Ascending aorta (tissue), 2 donors: ENCODE measurements at regions of chr18 and their contacts with region 1.

Region 1: GRCh38 chr18:51029694-51030536 is at the start of gene SMAD4:
- DNase-seq: peak; percentile 79 to 98
- H3K4me3 ChIP-seq: peak within 1 kb of the TSS; percentile 91 to 95
- H3K27ac ChIP-seq: peak within 1 kb of the TSS; percentile 92 to 99
- H3K4me1 ChIP-seq: peaks cover 3 to 34% of the 10 kb centered on the region in 2 donors
- H3K27me3 ChIP-seq: no peaks in the 10 kb centered on the region
- CTCF ChIP-seq: no peak
- total RNA-seq, gene SMAD4: 196 TPM

Region 2: GRCh38 chr18:49486953-49487710 is 1542.8 kb before region 1 on chr18 and contains the start of gene C18orf32:
- intact Hi-C with region 1: loop called (anchors 10 kb)
- DNase-seq: peak; percentile 71 to 97
- H3K4me3 ChIP-seq: peak within 1 kb of the TSS; percentile 58 to 96
- H3K27ac ChIP-seq: peak within 1 kb of the TSS; percentile 93 to 98
- H3K4me1 ChIP-seq: peaks cover 4 to 13% of the 10 kb centered on the region in 2 donors
- H3K27me3 ChIP-seq: no peaks in the 10 kb centered on the region
- CTCF ChIP-seq: no peak
- total RNA-seq, gene C18orf32: 7.8 TPM

Region 3: DNA sequence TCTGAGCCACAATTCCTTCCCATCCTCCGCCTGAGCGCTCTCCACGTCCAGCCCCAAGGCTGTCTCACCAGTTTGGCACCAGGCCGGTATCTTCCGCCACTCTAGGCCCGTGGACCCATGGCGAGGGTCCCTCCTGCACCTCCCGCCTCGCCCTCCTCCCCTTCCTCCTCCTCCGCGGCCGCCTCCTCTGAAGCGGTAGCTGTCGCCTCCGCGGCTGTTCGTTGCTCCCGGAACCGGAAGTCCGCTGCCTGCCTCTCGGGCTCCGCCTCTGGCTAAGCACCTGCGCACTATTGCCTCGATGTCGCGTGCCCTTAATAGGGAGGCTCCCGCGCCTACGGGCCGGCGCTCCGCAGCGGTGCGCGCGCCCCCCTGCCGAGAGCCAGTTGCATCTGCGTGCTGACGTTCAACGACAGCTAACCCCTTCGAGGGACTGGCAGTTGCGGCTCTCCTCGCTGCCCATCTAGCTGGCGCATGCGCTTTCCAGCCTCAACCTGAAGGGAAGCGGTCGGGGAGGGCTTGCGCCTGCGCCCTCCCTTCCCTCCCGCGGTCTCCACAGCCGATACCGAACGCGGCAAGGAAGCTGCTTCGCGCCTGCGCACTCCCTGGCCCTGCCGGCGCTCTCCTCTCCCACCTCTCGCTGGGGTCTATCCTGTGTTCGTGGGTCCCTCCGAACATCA is 748.5 kb before region 1 on chr18 and contains the start of gene MBD1:
- intact Hi-C with region 1: loop called (anchors 1 kb)
- DNase-seq: peak; percentile 92 to 98
- H3K4me3 ChIP-seq: peak within 1 kb of the TSS; percentile 71 to 93
- H3K27ac ChIP-seq: peak within 1 kb of the TSS; percentile 92 to 97
- H3K4me1 ChIP-seq: peaks cover 3 to 23% of the 10 kb centered on the region in 2 donors
- H3K27me3 ChIP-seq: no peaks in the 10 kb centered on the region
- CTCF ChIP-seq: peak in 2 of 3 experiments; percentile 22 to 38
- total RNA-seq, gene MBD1: 53.4 TPM

Region 4: DNA sequence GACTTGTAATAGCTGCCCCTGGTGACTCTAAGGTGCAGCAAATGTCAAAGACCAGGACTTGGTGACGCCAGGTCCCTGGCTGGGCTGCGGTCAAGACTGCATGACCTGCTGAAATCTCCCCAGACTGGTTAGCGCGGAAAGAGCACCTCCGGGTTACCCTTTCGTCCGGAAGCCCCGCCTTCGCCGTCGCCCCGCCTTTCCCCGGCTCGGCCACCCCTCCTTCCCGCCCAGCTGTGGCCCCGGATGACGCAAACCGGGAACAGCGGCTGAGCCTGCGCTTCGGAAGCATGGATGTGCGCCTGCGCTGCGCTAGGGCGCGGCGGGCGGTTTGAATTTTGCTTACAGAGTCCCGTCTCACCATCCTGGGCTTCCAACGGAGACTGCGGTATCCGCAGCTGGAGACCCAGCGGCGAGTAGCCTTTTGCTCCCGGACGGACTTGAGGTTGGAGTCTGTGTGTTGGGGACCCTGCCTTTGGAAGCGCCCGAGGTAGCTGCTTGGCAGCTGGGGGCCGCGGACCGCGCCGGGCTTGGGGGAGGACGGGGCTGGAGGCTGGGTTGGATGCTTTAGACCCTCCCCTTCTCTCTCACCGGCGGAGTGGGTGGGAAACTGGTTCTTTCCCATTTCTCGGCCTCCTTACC is 655.0 kb before region 1 on chr18 and contains the start of gene SKA1:
- intact Hi-C with region 1: loop called (anchors 2 kb)
- DNase-seq: peak; percentile 62 to 93
- H3K4me3 ChIP-seq: peak within 1 kb of the TSS; percentile 50 to 70
- H3K27ac ChIP-seq: peak within 1 kb of the TSS; percentile 14 to 72
- H3K4me1 ChIP-seq: peaks cover 0 to 7% of the 10 kb centered on the region in 2 donors
- H3K27me3 ChIP-seq: no peaks in the 10 kb centered on the region
- CTCF ChIP-seq: no peak
- total RNA-seq, gene SKA1: not detected

Region 5: DNA sequence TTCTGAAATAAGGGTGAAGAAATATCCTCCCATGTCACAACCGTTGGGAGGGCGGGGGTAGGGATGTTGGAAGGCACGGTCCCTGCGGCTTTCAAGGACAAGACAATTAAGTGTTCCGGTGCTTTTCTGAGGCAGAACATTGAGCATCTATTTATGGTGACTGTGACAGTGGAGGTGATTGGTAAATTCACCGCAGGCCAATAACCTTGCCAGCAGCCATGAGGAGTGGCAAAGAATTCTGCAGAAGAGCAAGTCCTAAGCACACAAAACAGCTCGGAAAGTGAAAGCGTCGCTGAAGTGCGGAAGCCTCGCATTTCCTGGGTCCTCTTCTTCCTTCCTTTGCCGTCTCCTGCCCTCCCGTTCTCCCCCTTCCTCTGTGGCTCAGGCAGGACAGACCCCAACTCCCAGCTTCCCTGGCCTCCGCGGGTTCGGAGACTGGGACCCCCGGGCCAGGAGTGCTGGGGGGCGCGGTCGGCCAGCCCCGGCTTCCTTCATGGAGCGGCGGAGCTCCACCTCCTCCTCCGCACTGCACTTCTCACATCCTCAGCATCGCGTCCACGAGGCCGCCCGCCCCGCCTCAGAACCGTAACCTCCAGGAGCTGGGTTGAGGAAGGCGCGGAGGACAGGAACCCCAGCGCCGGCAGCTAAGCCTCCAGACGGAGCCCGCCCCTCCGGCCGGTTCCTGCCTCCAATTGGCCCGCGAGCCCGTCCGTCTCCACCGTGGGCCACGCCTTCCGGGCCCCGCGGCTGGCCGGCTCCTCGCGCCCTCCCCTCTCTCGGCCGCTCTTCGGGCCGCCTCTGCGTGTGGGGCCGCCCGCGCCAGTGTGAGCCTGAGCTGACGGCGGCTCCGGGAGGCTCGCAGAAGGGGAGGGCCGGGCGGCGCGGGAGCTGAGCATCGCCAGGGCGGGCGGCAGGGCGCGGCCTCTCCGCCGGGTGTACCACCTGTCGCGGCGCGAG is 151.3 kb before region 1 on chr18 and contains the start of gene ME2:
- intact Hi-C with region 1: loop called (anchors 1 kb)
- DNase-seq: peak; percentile 68 to 95
- H3K4me3 ChIP-seq: peak within 1 kb of the TSS; percentile 88 to 92
- H3K27ac ChIP-seq: peak within 1 kb of the TSS; percentile 87 to 92
- H3K4me1 ChIP-seq: peaks cover 6% of the 10 kb centered on the region in 2 donors
- H3K27me3 ChIP-seq: no peaks in the 10 kb centered on the region
- CTCF ChIP-seq: no peak
- total RNA-seq, gene ME2: 27.4 TPM

Region 6: DNA sequence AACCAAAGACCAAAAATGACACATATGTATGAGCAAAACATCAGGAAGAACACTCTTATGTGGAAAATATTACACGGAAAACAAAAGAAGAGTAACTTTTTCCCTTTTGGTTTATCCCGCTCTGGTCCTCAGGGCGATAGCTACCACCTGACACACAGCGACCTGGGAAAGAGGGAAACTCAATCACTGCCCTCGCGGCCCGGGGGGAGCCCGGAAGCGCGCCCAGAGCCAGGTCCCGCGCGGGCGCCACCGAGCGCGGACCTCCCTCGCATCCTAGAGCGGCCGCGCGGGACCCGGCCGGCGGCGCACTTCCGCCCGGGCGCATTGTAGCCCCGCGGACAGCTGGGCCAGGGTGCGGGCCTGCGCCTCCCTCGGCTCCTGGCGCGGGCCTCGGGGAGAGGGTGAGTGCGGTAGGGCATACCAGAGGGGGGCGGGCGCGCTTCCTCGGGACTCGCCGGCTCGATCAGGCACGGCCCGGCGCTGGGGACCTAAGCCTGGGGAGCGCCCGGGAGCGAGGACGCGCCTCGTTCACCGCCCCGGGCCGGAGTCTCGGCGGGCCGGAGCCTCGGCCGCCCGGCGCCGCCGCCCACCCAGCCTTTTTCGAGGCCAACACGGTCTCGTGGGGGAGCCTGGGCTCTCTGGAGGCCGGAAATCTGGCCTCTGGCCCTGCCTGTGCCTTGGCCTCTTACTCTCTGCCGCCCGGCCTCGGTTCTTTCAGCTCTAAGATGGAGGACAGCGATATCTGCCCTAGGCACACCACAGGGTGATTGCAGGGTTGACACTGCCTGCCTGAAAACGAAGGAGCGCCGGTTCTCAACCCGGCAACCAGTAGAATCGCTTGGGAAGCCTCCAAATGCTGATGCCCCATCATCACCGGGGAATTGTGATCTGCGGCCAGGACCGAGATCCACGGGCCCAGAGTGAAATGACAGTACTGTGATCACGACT is 61.9 kb before region 1 on chr18 and contains the start of gene ELAC1:
- intact Hi-C with region 1: loop called (anchors 1 kb)
- DNase-seq: peak; percentile 10 to 87
- H3K4me3 ChIP-seq: peak within 1 kb of the TSS; percentile 87 to 89
- H3K27ac ChIP-seq: peak within 1 kb of the TSS; percentile 96 to 98
- H3K4me1 ChIP-seq: peaks cover 0 to 7% of the 10 kb centered on the region in 2 donors
- H3K27me3 ChIP-seq: no peaks in the 10 kb centered on the region
- CTCF ChIP-seq: no peak
- total RNA-seq, gene ELAC1: not detected

Region 7: GRCh38 chr18:51235011-51235789 is 205.3 kb after region 1 on chr18:
- intact Hi-C with region 1: no loop called
- DNase-seq: no peak
- H3K4me3 ChIP-seq: no peak overlapping the region
- H3K27ac ChIP-seq: no peak overlapping the region
- H3K4me1 ChIP-seq: no peaks in the 10 kb centered on the region
- H3K27me3 ChIP-seq: no peaks in the 10 kb centered on the region
- CTCF ChIP-seq: no peak